Colonic mucosa (tissue), 4 donors: ENCODE measurements at regions of chr3 and their contacts with region 1.

Region 1: GRCh38 chr3:58532794-58533220 is 4.2 kb downstream of the ACOX2 start:
- DNase-seq: peak; percentile 82
- H3K4me3 ChIP-seq: no peak overlapping the region
- H3K27ac ChIP-seq: no peak overlapping the region
- H3K4me1 ChIP-seq: peaks cover 30% of the 10 kb centered on the region
- H3K27me3 ChIP-seq: no peaks in the 10 kb centered on the region
- CTCF ChIP-seq: peak; percentile 88

Region 2: DNA sequence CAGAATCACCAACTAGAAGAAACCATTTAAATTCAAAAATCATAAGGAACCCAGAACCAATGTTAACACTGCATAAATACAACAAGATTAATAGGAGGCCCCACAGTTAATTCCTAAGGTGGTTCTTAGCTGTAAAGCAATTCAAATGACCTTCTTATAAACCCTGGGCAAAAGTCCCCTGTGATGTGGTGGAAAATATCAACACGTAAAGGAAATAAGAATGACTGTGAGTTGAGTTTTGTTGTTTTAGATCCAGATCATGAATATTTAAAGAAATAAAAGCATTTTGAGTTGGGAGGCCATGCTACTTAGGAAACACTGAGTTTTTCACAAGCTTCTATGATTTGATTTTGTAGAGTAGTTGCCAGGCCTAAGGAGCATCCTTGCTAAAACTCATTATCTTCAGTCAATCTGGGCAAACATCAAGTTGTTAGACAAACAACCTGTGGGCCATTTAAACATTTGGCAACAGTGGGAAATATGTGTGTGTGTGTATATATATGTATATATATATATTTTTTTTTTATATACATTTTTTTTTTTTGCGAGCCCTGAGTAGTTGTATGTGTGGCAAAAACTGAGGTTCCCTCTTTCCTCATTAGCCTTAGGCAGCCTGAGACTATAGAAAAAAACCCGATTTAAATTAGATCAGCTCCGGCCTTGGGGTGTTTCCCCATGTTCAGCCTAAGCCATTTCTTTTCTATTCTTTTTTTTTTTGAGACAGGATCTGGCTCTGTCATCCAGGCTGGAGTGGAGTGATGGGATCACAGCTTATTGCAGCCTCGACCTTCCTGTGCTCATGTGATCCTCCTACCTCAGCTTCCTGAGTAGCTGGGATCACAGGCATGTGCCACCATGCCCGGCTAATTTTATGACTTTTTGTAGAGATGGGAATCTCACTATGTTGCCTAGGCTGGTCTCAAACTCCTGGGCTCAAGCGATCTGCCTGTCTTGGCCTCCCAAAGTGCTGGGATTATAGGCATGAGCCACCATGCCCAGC is 208.1 kb before region 1 on chr3:
- intact Hi-C with region 1: loop called (anchors 5 kb)
- DNase-seq: no peak
- H3K4me3 ChIP-seq: no peak overlapping the region
- H3K27ac ChIP-seq: peak overlapping the region; percentile 2
- H3K4me1 ChIP-seq: no peaks in the 10 kb centered on the region
- H3K27me3 ChIP-seq: no peaks in the 10 kb centered on the region
- CTCF ChIP-seq: no peak

Region 3: DNA sequence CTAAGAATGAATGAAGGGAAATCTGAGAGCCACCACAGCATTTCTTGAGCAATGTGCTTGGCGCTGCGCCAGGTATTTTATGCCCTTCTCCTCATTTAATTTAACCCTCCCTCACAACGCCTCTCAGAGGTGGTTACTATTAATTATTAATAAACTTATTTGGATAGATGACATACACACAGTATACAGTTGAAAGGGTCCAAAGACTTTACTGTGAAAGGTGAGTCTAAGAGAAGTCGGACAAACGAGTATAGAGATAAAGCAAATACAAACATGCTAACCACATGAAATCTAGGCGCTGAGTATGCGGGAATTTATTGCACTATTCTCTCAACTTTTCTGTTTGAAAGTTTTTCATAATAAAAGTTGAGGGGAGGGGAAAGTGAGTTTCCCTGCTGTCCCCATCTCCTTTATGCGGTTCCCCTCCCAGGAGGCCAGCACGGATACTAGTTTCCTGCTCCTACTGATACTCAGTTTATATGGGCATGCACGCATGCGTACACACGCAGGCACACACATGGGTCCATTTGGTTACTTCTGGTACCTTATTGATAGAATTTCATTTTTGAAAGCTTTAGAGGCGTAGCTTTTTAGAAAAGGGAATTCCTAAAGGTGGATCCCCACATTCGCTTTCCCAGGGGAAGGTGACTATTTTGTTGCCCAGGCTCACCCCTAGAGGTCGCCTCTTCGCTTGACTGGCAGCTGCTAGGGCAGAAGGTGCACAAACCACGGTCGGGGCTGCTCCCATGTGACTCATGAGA is 69.4 kb before region 1 on chr3:
- intact Hi-C with region 1: loop called (anchors 5 kb)
- DNase-seq: peak; percentile 85
- H3K4me3 ChIP-seq: peak overlapping the region; percentile 1
- H3K27ac ChIP-seq: no peak overlapping the region
- H3K4me1 ChIP-seq: no peaks in the 10 kb centered on the region
- H3K27me3 ChIP-seq: no peaks in the 10 kb centered on the region
- CTCF ChIP-seq: peak; percentile 76

Region 4: GRCh38 chr3:58900386-58900785 is 367.6 kb after region 1 on chr3:
- intact Hi-C with region 1: no loop called
- DNase-seq: no peak
- H3K4me3 ChIP-seq: no peak overlapping the region
- H3K27ac ChIP-seq: no peak overlapping the region
- H3K4me1 ChIP-seq: no peaks in the 10 kb centered on the region
- H3K27me3 ChIP-seq: no peaks in the 10 kb centered on the region
- CTCF ChIP-seq: no peak

Region 5: DNA sequence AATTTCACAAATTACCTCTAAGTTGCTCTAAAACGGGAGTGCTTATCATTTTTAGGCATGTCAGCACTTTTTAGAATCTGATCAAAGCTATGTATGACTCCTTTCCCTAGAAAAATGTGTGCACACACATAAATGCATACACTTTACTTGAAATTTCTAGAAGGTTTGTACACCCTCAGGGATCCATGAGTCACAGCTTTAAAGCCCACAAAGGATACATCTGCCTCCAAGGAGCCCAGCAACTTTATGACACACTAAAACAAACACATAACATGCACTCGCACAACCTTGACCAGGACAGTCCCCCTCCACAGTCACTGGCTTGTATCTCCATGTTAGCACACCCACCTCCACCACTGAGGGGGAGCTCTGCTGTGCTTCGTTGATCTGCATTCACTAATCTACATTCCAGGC is 1239.0 kb after region 1 on chr3:
- intact Hi-C with region 1: no loop called
- DNase-seq: no peak
- H3K4me3 ChIP-seq: no peak overlapping the region
- H3K27ac ChIP-seq: no peak overlapping the region
- H3K4me1 ChIP-seq: no peaks in the 10 kb centered on the region
- H3K27me3 ChIP-seq: no peaks in the 10 kb centered on the region
- CTCF ChIP-seq: no peak